ENCODE measurements at regions of chr12 and their contacts with region 1.

Region 1: DNA sequence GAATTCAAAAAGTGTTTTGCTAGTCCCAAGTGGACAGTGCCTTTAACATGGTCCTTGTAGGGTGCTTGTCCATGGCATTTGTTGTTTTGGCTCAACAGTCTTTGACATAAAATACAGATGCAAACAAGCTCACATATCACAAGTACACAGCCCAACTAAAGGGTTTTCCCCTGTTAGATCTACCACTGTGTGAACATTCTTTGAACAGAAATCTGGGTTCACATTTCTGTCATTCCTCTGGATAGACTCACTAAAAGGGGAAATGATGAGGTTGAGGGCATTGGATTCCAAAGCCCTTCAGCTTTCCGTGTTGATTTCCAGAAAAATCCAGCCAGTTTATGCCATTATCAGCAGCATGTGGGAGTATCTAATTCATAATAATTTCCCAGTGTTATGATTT is 54.1 kb downstream of the EP400 start:
- DNase-seq: no peak
- ATAC-seq: no peak
- H3K4me3 ChIP-seq: no peak overlapping the region
- H3K4me3 Mint-ChIP-seq: no peak overlapping the region
- H3K27ac ChIP-seq: no peak overlapping the region
- H3K27ac Mint-ChIP-seq: no peak overlapping the region
- H3K4me1 ChIP-seq: no peaks in the 10 kb centered on the region
- H3K4me1 Mint-ChIP-seq: no peaks in the 10 kb centered on the region
- H3K27me3 ChIP-seq: no peaks in the 10 kb centered on the region
- H3K27me3 Mint-ChIP-seq: no peaks in the 10 kb centered on the region
- CTCF ChIP-seq: no peak

Region 2: DNA sequence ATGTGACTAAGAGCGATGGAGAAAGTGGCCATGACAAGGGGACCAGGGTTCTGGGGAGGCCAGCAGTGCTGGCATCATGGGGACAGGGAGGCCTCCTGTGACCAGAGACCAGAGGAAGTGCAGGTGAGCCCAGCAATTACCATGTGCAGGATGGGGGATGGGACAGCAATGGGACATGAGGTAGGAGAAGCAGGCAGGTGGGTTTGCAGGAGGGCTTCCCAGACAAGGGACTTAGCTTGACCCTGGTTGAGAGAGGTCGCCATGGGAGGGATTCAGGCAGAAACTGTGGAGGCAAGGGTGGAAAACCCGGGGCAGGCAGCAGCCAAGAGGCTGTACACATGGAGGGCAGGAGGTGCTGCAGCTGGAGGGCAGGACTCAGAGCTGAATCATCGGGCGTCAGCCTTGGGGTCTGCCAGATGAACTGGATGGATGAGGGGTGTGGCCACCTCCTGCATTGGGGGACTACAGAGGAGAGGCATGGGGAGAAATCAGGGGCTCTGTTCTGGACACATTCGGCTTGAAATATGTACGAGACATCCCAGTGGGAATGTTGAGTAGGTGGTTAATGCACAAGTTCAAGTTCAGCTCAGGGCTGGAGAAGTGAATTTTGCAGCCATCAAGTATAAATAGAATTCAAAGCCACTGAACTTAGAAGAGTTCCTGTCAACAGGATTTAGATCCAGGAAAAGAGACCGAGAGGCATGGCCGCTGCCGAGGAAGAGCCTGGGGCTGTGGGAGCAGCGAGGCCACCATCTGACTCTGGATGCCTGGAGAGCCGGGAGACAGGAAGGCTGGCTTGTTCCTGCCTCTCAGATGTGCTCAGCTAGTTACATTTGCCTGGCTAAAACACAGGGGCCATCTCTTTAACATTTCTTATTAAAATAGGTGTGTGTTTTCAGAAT is 256.3 kb before region 1 on chr12:
- CTCF ChIA-PET with region 1: no interaction called
- POLR2A ChIA-PET with region 1: no interaction called
- intact Hi-C with region 1: no loop called
- DNase-seq: no peak
- ATAC-seq: no peak
- H3K4me3 ChIP-seq: no peak overlapping the region
- H3K4me3 Mint-ChIP-seq: no peak overlapping the region
- H3K27ac ChIP-seq: no peak overlapping the region
- H3K27ac Mint-ChIP-seq: no peak overlapping the region
- H3K4me1 ChIP-seq: no peaks in the 10 kb centered on the region
- H3K4me1 Mint-ChIP-seq: no peaks in the 10 kb centered on the region
- H3K27me3 ChIP-seq: no peaks in the 10 kb centered on the region
- H3K27me3 Mint-ChIP-seq: no peaks in the 10 kb centered on the region
- CTCF ChIP-seq: no peak

Region 3: DNA sequence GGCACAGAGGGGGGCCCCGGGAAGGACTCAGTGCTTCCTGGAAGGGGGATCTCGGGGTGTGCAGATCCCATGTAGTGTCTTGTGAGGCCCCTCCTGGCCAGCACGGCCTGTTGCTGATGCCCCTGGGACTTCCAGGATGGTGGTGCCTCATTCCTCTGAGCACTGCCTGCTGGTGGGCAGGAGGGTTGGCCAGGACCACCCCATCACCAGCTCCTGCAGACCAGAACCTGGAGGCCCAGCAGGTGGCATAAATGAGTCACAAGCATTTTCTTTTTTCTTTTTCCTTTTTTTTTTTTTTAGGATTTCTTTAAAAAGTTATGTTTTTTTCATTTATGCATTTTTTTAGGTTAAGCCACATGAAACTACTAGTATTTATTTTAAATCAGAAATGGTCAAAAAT is 167.7 kb before region 1 on chr12:
- CTCF ChIA-PET with region 1: no interaction called
- POLR2A ChIA-PET with region 1: no interaction called
- intact Hi-C with region 1: loop called in 1 of 2 experiments (anchors 5 kb)
- DNase-seq: peak in 1 of 14 experiments; percentile 34
- ATAC-seq: no peak
- H3K4me3 ChIP-seq: no peak overlapping the region
- H3K4me3 Mint-ChIP-seq: no peak overlapping the region
- H3K27ac ChIP-seq: no peak overlapping the region
- H3K27ac Mint-ChIP-seq: no peak overlapping the region
- H3K4me1 ChIP-seq: no peaks in the 10 kb centered on the region
- H3K4me1 Mint-ChIP-seq: peaks cover under 1% of the 10 kb centered on the region
- H3K27me3 ChIP-seq: peaks cover under 1 to 4% of the 10 kb centered on the region in 2 experiments
- H3K27me3 Mint-ChIP-seq: peaks cover 14% of the 10 kb centered on the region
- CTCF ChIP-seq: peak; percentile 46

Region 4: GRCh38 chr12:131975228-131975627 is 28.6 kb before region 1 on chr12:
- CTCF ChIA-PET with region 1: no interaction called
- POLR2A ChIA-PET with region 1: no interaction called
- intact Hi-C with region 1: no loop called
- DNase-seq: no peak
- ATAC-seq: no peak
- H3K4me3 ChIP-seq: no peak overlapping the region
- H3K4me3 Mint-ChIP-seq: no peak overlapping the region
- H3K27ac ChIP-seq: no peak overlapping the region
- H3K27ac Mint-ChIP-seq: no peak overlapping the region
- H3K4me1 ChIP-seq: peaks cover 3% of the 10 kb centered on the region
- H3K4me1 Mint-ChIP-seq: peaks cover 32% of the 10 kb centered on the region
- H3K27me3 ChIP-seq: no peaks in the 10 kb centered on the region
- H3K27me3 Mint-ChIP-seq: no peaks in the 10 kb centered on the region
- CTCF ChIP-seq: no peak

Measured in CD4-positive, alpha-beta T cell (primary cell).